Activated CD4-positive, alpha-beta T cell treated with anti-CD3 and anti-CD28 coated beads, Interleukin-2, amount 10 ng/mL, durations not matched to agents 24 days and 14 days (primary cell): ENCODE measurements at regions of chrX and their contacts with region 1.

Region 1: DNA sequence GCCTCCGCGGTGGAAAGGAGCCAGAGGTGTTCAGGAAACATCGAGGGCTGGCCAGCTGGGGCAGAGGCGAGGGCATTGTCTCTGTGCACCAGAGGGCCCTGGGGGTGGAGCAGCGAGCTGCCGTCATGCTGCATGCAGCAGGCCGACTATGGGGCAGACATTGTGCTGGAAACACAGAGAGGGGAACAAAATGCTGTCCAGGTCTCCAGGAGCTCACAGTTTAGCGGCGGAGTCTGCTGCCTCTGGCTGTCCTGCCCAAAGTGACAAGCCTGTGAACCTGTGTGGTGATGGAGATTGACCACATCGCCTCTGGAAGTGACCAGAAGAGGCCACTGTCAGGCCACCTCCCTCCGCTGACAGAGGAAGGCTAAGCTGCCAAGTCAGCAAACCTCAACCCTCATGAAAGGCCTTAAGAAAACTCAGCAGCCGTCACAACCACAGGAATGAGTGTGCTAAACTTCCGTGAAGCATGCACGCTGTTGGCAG is 20.1 kb upstream of the SASH3 start:
- DNase-seq: peak; percentile 87
- H3K4me3 Mint-ChIP-seq: peak overlapping the region; percentile 44
- H3K27ac Mint-ChIP-seq: peak overlapping the region; percentile 93
- H3K4me1 Mint-ChIP-seq: peaks cover 43% of the 10 kb centered on the region
- H3K27me3 Mint-ChIP-seq: no peaks in the 10 kb centered on the region

Region 2: DNA sequence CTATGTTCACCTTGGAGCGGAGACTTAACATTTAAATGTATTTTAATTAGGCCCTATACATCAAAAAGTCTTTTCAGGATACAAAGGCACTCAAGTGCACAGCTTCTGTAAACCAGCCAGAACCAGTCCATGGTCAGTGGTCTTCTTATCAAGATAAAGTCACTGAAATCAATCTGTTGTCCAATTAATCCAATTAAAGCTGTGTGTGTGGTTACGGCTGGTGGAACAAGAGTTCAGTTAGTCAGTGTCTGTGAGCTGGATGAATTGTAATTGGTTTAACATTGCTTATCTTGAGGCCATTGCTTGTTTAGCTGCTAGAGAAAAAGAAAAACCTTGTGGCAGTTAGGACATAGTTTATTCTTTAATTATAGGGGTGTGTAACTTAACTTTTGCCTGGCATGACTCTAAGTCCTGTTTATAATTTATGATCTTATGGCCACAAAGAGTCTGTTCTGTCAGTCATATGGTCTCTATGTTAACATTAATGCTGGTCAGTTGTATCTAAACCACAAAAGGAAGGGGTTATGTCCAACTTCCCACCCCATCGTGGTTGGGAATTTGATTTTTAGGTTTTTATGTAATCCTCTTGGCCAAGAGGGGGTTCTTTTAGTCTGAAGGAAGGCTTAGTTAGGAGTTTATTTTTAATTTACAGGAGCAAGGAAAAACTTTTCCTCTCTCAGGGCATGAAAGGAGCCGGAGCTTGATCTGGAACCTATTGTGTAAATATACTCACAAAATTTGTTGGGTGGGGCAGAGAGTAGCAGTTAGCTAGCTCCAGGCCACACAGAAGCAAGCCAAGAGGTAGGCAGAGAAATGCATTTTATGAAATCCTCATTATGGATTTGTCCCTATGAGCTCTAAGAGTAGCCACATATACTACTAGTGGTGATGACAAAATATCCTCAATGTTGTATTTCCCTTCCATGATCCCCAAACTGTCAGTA is 1041.7 kb before region 1 on chrX:
- intact Hi-C with region 1: no loop called
- DNase-seq: no peak
- H3K4me3 Mint-ChIP-seq: no peak overlapping the region
- H3K27ac Mint-ChIP-seq: no peak overlapping the region
- H3K4me1 Mint-ChIP-seq: no peaks in the 10 kb centered on the region
- H3K27me3 Mint-ChIP-seq: no peaks in the 10 kb centered on the region

Region 3: GRCh38 chrX:129772796-129773431 is 13.3 kb after region 1 on chrX:
- intact Hi-C with region 1: loop called (anchors 1 kb)
- DNase-seq: peak; percentile 81
- H3K4me3 Mint-ChIP-seq: peak overlapping the region; percentile 60
- H3K27ac Mint-ChIP-seq: peak overlapping the region; percentile 95
- H3K4me1 Mint-ChIP-seq: peaks cover 57% of the 10 kb centered on the region
- H3K27me3 Mint-ChIP-seq: no peaks in the 10 kb centered on the region

Region 4: GRCh38 chrX:129798888-129799287 is 39.3 kb after region 1 on chrX:
- intact Hi-C with region 1: loop called (anchors 5 kb)
- DNase-seq: no peak
- H3K4me3 Mint-ChIP-seq: peak overlapping the region; percentile 45
- H3K27ac Mint-ChIP-seq: peak overlapping the region; percentile 77
- H3K4me1 Mint-ChIP-seq: peaks cover 19% of the 10 kb centered on the region
- H3K27me3 Mint-ChIP-seq: no peaks in the 10 kb centered on the region

Region 5: GRCh38 chrX:129823115-129823514 is 63.5 kb after region 1 on chrX:
- intact Hi-C with region 1: loop called (anchors 2 kb)
- DNase-seq: peak; percentile 83
- H3K4me3 Mint-ChIP-seq: no peak overlapping the region
- H3K27ac Mint-ChIP-seq: no peak overlapping the region
- H3K4me1 Mint-ChIP-seq: peaks cover 10% of the 10 kb centered on the region
- H3K27me3 Mint-ChIP-seq: no peaks in the 10 kb centered on the region

Region 6: DNA sequence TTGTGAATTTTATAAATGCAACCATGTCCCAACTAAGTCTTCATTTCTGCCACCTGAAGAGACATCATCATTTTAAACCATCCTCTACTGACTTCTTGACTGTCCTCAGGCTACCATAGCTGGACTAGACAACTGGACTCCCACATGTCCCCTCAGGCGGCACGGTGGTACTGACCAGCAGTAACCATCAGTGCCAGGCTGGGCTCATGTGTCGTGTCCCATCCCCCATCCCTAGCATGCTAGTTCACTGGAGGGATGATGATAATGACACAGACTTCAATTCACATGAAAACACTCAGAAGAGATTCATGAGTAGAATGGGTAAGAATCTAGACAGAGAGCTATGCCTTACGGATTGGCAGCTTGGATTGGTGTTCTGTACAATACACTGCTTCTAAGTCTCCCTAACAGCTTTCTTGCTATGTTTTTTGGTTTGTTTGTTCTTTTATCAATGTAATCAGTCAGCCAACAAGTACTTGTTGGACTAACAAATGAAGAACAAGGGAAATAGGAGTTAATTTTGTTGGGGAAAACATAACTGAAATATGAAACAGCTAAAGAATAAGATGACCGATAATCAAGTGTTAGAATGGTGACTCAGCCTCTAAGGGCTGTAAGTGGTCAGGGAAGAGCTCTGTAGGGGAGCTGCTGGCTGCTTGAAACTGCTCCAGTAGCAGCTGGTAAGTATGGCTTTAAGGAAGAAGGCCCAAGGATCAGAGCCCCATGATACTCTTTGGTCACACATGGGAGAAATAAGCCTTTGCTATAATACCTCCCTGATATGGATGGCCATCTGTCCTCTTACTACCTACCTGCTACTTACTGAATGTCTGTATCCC is 73.8 kb after region 1 on chrX:
- intact Hi-C with region 1: no loop called
- DNase-seq: no peak
- H3K4me3 Mint-ChIP-seq: no peak overlapping the region
- H3K27ac Mint-ChIP-seq: no peak overlapping the region
- H3K4me1 Mint-ChIP-seq: no peaks in the 10 kb centered on the region
- H3K27me3 Mint-ChIP-seq: no peaks in the 10 kb centered on the region